Dorsolateral prefrontal cortex (tissue), 120 donors: ENCODE measurements at regions of chr2 and their contacts with region 1.

Region 1: GRCh38 chr2:23692851-23693605 is 233.9 kb downstream of the ATAD2B start:
- DNase-seq: peak in 2 of 10 donors; percentile 25 to 31
- H3K4me3 ChIP-seq: no peak overlapping the region
- H3K27ac ChIP-seq: peak overlapping the region in 6 of 59 donors; percentile 40 to 80 (median 54)
- H3K27me3 ChIP-seq: no peaks in the 10 kb centered on the region
- CTCF ChIP-seq: no peak

Region 2: GRCh38 chr2:23658466-23658942 is 34.5 kb before region 1 on chr2:
- intact Hi-C with region 1: loop called in 1 of 2 experiments (anchors 5 kb)
- DNase-seq: peak in 5 of 10 donors; percentile 28 to 75 (median 46)
- H3K4me3 ChIP-seq: no peak overlapping the region
- H3K27ac ChIP-seq: peak overlapping the region in 26 of 59 donors; percentile 14 to 75 (median 46)
- H3K27me3 ChIP-seq: peaks cover 0 to 11% (median 0%) of the 10 kb centered on the region in 45 donors
- CTCF ChIP-seq: no peak

Region 3: GRCh38 chr2:23720705-23721453 is 27.9 kb after region 1 on chr2:
- intact Hi-C with region 1: no loop called
- DNase-seq: no peak
- H3K4me3 ChIP-seq: no peak overlapping the region
- H3K27ac ChIP-seq: no peak overlapping the region
- H3K27me3 ChIP-seq: no peaks in the 10 kb centered on the region
- CTCF ChIP-seq: no peak